ENCODE measurements at regions of chr22 and their contacts with region 1.

Region 1: GRCh38 chr22:24133187-24133965 is 47.9 kb upstream of the SUSD2 start:
- DNase-seq: no peak
- CTCF ChIP-seq: peak; percentile 43

Region 2: GRCh38 chr22:24117942-24118341 is 15.4 kb before region 1 on chr22:
- CTCF ChIA-PET with region 1: no interaction called
- POLR2A ChIA-PET with region 1: no interaction called
- DNase-seq: no peak
- CTCF ChIP-seq: no peak

Region 3: DNA sequence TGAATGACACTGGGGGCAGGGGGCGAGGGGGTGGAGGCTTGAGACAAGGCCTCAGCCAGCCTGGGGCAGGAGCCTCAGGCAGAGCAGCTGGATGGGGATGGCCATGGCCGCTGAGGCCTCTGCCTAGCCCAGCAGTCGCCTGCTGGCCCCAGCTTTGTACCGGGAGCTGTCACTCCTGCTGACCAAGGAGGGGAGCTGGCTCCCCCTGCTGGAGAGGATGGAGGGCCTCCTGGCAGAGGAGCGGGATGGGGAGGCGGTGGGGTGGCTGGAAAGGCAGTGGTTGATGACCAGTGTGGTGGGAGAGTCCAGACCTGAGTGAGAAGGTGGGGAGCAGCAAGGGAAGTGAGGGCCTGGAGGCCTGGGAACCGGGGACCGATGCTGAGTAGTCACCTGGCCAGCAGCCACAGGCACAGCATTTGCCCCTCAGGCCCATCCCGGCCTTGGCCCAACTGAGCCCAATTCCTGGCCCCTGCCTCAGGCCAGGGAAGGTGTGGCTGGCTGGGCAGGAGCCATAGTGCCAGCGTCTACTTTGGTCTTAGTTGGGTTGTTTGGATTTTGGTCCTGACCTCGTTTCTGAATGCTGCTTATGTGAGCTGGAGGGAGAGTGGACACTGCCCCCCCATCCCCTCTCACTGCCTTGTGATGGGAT is 41.9 kb after region 1 on chr22:
- CTCF ChIA-PET with region 1: interaction called, 15 read pairs
- POLR2A ChIA-PET with region 1: no interaction called
- DNase-seq: peak; percentile 77
- CTCF ChIP-seq: peak; percentile 85

Measured in GM10248 (cell line).